Heart right ventricle (tissue), 16 donors: ENCODE measurements at regions of chr5 and their contacts with region 1.

Region 1: DNA sequence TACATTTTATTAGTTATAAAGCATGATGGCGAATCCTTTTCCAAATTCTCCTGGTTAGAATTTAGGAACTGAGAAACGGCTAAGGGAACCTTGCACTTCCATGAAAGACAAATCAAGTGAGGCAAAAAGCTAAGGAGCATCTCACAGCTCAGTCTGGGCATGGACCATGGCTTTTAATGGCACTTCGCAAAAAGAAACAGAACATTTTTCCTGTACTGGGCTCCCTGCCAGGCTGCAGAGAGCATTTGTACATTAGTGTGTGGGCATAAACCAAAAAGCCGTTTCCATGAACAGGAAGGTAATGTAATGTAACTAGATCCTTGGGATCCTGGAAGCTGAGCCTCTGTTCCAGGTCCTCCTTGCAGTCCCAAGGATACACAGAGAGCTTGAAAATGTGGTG is 354.2 kb downstream of the MRPS30 start:
- DNase-seq: no peak
- ATAC-seq: no peak
- H3K4me3 ChIP-seq: no peak overlapping the region
- H3K27ac ChIP-seq: no peak overlapping the region
- H3K4me1 ChIP-seq: no peaks in the 10 kb centered on the region
- H3K27me3 ChIP-seq: no peaks in the 10 kb centered on the region
- CTCF ChIP-seq: no peak

Region 2: DNA sequence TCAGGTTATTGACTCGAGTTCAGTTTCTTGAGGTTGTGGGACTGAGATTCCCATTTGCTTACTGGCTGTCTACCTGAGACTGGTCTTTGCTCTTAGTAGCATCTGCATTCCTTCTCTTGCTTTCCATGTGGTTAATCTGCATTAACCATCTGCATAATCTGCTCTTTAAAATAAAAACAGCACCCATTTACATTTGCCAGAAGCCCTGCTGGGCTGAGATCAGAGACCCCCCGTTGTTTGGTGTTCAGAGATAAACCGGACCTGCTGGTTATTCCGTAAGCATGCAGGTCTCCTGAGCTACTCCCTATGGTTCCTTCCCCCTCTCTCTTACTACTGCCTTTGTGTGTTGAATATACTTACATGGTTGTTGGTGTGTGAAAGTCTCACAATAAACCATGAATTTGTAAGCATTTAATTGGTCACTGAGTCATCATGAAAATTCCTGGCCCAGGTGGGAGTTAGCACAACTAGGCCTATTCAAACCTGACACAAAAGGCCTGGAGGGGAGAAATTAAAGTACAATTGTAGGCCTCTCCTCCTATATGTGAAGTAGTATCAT is 42.5 kb after region 1 on chr5:
- intact Hi-C with region 1: loop called in 1 of 10 experiments (anchors 1 kb)
- DNase-seq: no peak
- ATAC-seq: no peak
- H3K4me3 ChIP-seq: no peak overlapping the region
- H3K27ac ChIP-seq: no peak overlapping the region
- H3K4me1 ChIP-seq: no peaks in the 10 kb centered on the region
- H3K27me3 ChIP-seq: no peaks in the 10 kb centered on the region
- CTCF ChIP-seq: no peak